Testis (tissue), 5 donors: ENCODE measurements at regions of chr18 and their contacts with region 1.

Region 1: GRCh38 chr18:36186911-36187834 is at the start of gene MOCOS:
- DNase-seq: peak; percentile 83
- H3K4me3 ChIP-seq: peak within 1 kb of the TSS; percentile 61 to 75
- H3K27ac ChIP-seq: peak within 1 kb of the TSS; percentile 25 to 47
- H3K4me1 ChIP-seq: peaks cover 13% of the 10 kb centered on the region
- H3K27me3 ChIP-seq: no peaks in the 10 kb centered on the region
- CTCF ChIP-seq: no peak
- POLR2A ChIP-seq: peak; percentile 31
- total RNA-seq, gene MOCOS: 1.5 to 1.9 TPM

Region 2: DNA sequence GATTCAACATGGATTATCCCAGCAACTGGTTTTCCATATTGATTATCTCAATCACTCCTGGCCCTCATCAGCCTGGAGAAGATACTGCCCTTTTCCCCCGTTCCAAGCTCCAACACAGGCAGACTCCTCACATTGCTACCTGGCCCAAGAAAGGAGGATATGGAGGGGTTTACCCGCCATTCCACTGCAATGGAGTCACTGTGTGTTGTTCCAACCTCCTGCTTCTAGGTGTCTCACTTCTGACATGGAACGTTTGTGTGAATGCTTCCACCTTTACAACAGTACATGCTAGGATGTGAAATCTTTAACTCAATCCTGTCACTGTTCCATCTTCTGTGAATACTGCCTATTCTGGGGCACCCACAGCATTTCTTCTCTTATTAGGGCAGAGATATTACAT is 178.0 kb before region 1 on chr18:
- intact Hi-C with region 1: no loop called
- DNase-seq: no peak
- H3K4me3 ChIP-seq: no peak overlapping the region
- H3K27ac ChIP-seq: no peak overlapping the region
- H3K4me1 ChIP-seq: no peaks in the 10 kb centered on the region
- H3K27me3 ChIP-seq: no peaks in the 10 kb centered on the region
- CTCF ChIP-seq: no peak
- POLR2A ChIP-seq: no peak

Region 3: GRCh38 chr18:36129300-36130038 is 57.7 kb before region 1 on chr18 and contains the starts of genes ELP2 and SLC39A6:
- intact Hi-C with region 1: loop called (anchors 10 kb)
- DNase-seq: peak; percentile 99
- H3K4me3 ChIP-seq: peak within 1 kb of the TSS; percentile 91 to 97
- H3K27ac ChIP-seq: peak within 1 kb of the TSS; percentile 91 to 99
- H3K4me1 ChIP-seq: peaks cover 11% of the 10 kb centered on the region
- H3K27me3 ChIP-seq: no peaks in the 10 kb centered on the region
- CTCF ChIP-seq: peak in 1 of 3 experiments; percentile 3
- POLR2A ChIP-seq: peak; percentile 54
- total RNA-seq, gene ELP2: 94.8 to 95.2 TPM
- total RNA-seq, gene SLC39A6: 51.4 to 53.8 TPM

Region 4: GRCh38 chr18:36284671-36285295 is 97.6 kb after region 1 on chr18:
- intact Hi-C with region 1: no loop called
- DNase-seq: peak; percentile 72
- H3K4me3 ChIP-seq: no peak overlapping the region
- H3K27ac ChIP-seq: no peak overlapping the region
- H3K4me1 ChIP-seq: peaks cover 4% of the 10 kb centered on the region
- H3K27me3 ChIP-seq: no peaks in the 10 kb centered on the region
- CTCF ChIP-seq: peak; percentile 92 to 93 (median 93)
- POLR2A ChIP-seq: no peak